ENCODE measurements at regions of chr16 and their contacts with region 1.

Region 1: GRCh38 chr16:679814-680622 is at the start of gene STUB1:
- DNase-seq: peak; percentile 88
- CTCF ChIP-seq: no peak

Region 2: DNA sequence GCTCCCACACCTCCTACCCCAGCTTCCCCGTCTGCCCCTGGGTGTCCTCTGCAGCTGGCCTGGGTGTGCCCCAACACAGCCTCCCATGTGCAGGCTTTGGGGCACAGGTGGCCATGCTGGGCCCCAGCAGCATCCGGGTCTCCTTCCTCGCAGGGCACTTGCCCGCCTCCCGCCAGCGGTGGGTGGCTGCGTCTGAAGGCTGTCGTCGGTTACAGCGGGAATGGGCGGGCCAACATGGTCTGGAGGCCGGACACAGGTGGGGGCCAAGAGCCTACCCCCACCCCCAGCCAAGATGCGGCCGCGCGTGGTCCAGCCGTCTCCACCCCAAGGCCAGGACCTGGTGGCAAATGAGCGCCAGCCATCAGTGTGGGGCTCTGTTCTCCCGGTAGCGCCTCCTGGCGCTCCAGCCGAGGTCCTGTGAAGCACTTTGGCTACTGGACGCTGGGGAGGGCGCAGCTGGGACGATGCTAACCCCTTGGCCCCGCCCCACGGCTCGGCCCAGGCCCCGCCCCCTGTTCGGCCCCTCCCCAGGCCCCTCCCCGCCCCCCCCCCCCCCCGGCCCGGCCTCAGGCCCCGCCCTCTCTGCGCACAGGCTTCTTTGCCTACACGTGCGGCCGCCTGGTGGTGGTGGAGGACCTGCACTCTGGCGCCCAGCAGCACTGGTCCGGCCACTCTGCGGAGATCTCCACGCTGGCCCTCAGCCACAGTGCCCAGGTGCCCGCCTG is 19.4 kb before region 1 on chr16:
- CTCF ChIA-PET with region 1: interaction called, 28 read pairs
- POLR2A ChIA-PET with region 1: no interaction called
- DNase-seq: peak; percentile 95
- CTCF ChIP-seq: peak; percentile 54

Region 3: DNA sequence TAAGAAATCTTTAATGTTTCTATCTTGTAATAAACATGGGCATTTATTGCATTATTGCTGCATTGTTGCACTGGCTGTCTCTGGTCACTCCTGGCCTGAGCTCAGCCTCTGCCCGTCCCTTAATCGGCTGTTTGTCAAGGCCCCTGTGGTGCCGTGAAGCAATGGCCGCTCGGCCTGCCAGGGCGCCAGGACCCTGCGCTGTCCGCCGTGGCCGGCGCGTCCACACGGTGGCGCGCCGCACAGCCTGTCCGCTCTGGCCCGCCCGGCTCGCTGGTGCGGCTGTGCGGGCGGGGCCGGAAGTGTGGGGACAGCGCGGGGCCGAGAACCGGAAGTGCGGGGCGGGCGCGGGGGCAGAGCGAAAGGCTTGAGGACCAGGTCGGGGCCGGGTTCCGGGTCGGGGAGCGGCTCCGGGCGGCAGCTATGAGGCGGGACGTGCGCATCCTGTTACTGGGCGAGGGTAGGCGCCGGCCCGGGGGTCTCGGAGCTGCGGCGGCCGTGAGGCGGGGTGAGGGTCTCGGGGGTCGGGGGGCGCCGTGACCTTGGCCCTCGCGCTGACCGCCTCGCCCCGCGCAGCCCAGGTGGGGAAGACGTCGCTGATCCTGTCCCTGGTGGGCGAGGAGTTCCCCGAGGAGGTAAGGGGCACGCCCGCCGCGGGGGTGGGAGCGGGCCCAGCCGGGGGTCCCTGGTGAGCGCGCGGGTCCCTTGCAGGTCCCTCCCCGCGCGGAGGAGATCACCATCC is 12.1 kb before region 1 on chr16 and contains the start of gene RHOT2:
- CTCF ChIA-PET with region 1: interaction called, 28 read pairs
- POLR2A ChIA-PET with region 1: interaction called, 4 read pairs
- DNase-seq: peak; percentile 94
- CTCF ChIP-seq: peak; percentile 98

Measured in GM10248 (cell line).